ENCODE measurements at regions of chr2 and their contacts with region 1.

Region 1: DNA sequence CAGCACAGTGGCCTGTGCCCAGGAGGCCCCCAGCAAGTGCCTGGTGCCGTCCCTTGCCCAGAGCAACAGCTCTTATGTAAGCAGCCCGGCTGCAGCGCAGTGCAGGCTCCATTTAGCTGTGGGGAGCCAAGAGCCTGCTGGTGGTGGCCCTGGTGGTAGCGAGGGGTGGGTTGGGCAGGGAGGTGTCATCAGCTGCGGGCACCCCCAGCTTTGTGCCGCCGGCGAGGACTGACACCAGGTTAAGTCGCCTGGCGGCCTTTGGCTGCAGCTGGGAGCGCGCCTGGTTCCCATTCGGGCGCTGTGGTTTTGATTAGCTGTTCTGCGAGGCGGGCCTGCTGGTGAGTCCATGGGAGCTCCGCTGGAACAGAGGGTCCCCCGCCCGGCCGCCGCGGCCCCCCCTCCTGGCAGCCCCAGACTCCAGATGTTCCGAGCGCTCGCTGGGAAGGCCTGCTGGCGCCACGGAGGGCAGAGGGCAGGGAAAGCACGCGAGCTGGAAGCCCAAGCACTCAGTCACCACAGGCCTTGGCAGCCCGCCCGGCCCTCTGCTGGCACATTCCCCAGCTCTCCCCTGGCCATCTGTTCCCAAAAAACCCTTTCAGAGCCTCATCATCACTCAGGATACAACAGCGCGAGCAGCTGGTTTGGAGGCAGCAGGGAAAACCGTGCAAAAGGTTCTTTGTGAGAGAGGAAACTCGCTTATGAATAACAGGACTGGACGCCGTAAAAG is 18.4 kb downstream of the ATOH8 start:
- DNase-seq: peak; percentile 97

Region 2: GRCh38 chr2:85728883-85729824 is 43.0 kb before region 1 on chr2:
- intact Hi-C with region 1: loop called (anchors 1 kb)
- DNase-seq: peak; percentile 95

Region 3: GRCh38 chr2:85741833-85742455 is 30.2 kb before region 1 on chr2:
- intact Hi-C with region 1: loop called (anchors 1 kb)
- DNase-seq: no peak

Region 4: GRCh38 chr2:85750587-85751575 is 21.3 kb before region 1 on chr2:
- intact Hi-C with region 1: loop called (anchors 1 kb)
- DNase-seq: peak; percentile 86

Region 5: DNA sequence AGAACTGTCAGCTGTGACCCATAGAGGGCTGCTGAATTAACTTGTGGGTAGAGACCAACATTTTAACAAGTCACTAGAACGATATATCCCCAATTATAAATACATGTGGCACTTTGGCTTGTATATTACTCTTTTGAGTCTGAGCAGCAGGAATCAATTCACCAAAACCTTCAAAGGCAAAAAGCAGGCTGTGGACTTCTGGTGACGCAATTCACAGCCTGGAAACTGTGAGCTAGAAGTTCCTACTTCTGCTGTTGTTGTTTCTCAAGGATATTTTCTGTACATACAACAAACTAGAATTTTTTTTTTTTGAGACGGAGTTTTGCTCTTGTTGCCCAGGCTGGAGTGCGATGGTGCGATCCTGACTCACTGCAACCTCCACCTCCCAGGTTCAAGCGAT is 371.1 kb after region 1 on chr2:
- intact Hi-C with region 1: no loop called
- DNase-seq: no peak